ENCODE measurements at regions of chr3 and their contacts with region 1.

Region 1: GRCh38 chr3:105691633-105692032 is 177.2 kb downstream of the CBLB start:
- DNase-seq: no peak
- H3K4me3 ChIP-seq: no peak overlapping the region
- H3K27ac ChIP-seq: no peak overlapping the region
- H3K4me1 ChIP-seq: peaks cover 0 to 26% (median 1%) of the 10 kb centered on the region in 6 donors
- H3K27me3 ChIP-seq: no peaks in the 10 kb centered on the region
- CTCF ChIP-seq: no peak
- POLR2A ChIP-seq: no peak

Region 2: GRCh38 chr3:106609666-106610301 is 918.2 kb after region 1 on chr3:
- intact Hi-C with region 1: loop called (anchors 5 kb)
- DNase-seq: no peak
- H3K4me3 ChIP-seq: no peak overlapping the region
- H3K27ac ChIP-seq: no peak overlapping the region
- H3K4me1 ChIP-seq: peaks cover 0 to 5% (median 0%) of the 10 kb centered on the region in 6 donors
- H3K27me3 ChIP-seq: no peaks in the 10 kb centered on the region
- CTCF ChIP-seq: peak; percentile 51 to 88 (median 75)
- POLR2A ChIP-seq: no peak

Measured in spleen (tissue), 13 donors.